ENCODE measurements at regions of chr11 and their contacts with region 1.

Region 1: GRCh38 chr11:34525887-34526636 is 12.5 kb upstream of the ELF5 start:
- H3K4me3 ChIP-seq: no peak overlapping the region
- H3K27ac ChIP-seq: no peak overlapping the region
- H3K4me1 ChIP-seq: no peaks in the 10 kb centered on the region
- CTCF ChIP-seq: no peak

Region 2: GRCh38 chr11:34512840-34513681 is 13.0 kb before region 1 on chr11:
- CTCF ChIA-PET with region 1: interaction called, 18 read pairs
- POLR2A ChIA-PET with region 1: no interaction called
- H3K4me3 ChIP-seq: no peak overlapping the region
- H3K27ac ChIP-seq: no peak overlapping the region
- H3K4me1 ChIP-seq: no peaks in the 10 kb centered on the region
- CTCF ChIP-seq: 0 out of 2 replicates have a peak, but pooled peaks have one; percentile 20